ENCODE measurements at regions of chr11 and their contacts with region 1.

Region 1: GRCh38 chr11:7657306-7658025 is 15.8 kb downstream of the CYB5R2 start:
- DNase-seq: peak in 1 of 2 experiments; percentile 65
- H3K4me3 ChIP-seq: no peak overlapping the region
- H3K27ac ChIP-seq: no peak overlapping the region
- H3K4me1 ChIP-seq: no peaks in the 10 kb centered on the region
- H3K27me3 ChIP-seq: no peaks in the 10 kb centered on the region
- CTCF ChIP-seq: peak; percentile 74 to 90 (median 89)
- EP300 ChIP-seq: no peak
- POLR2A ChIP-seq: no peak
- RAD21 ChIP-seq: peak; percentile 96 to 97

Region 2: GRCh38 chr11:7513234-7514098 is 144.0 kb before region 1 on chr11 and contains the start of gene PPFIBP2:
- CTCF ChIA-PET with region 1: interaction called, 28 read pairs
- POLR2A ChIA-PET with region 1: interaction called, 3 read pairs
- DNase-seq: peak in 1 of 2 experiments; percentile 96
- H3K4me3 ChIP-seq: peak within 1 kb of the TSS; percentile 63 to 77 (median 70)
- H3K27ac ChIP-seq: no peak within 1 kb of the TSS
- H3K4me1 ChIP-seq: peaks cover 0 to 9% (median 5%) of the 10 kb centered on the region in 4 experiments; a peak in 5 of 7 replicates
- H3K27me3 ChIP-seq: peaks cover 0 to 17% (median 9%) of the 10 kb centered on the region in 4 experiments; a peak in 4 of 7 replicates
- CTCF ChIP-seq: peak; percentile 51 to 69 (median 65)
- EP300 ChIP-seq: peak in 1 of 2 experiments; percentile 19; a peak in 1 of 3 replicates
- POLR2A ChIP-seq: 0 out of 3 replicates have a peak, but pooled peaks of 1 of the 2 experiments have one; percentile 52
- RAD21 ChIP-seq: peak; percentile 63 to 73
- total RNA-seq, gene PPFIBP2: 9.8 and 11.7 TPM in 2 replicates

Region 3: GRCh38 chr11:7536100-7536499 is 121.4 kb before region 1 on chr11:
- CTCF ChIA-PET with region 1: interaction called, 11 read pairs
- POLR2A ChIA-PET with region 1: no interaction called
- DNase-seq: peak in 1 of 2 experiments; percentile 56
- H3K4me3 ChIP-seq: no peak overlapping the region
- H3K27ac ChIP-seq: no peak overlapping the region
- H3K4me1 ChIP-seq: no peaks in the 10 kb centered on the region; a peak in 2 of 7 replicates
- H3K27me3 ChIP-seq: no peaks in the 10 kb centered on the region
- CTCF ChIP-seq: peak; percentile 30 to 84 (median 67)
- EP300 ChIP-seq: no peak
- POLR2A ChIP-seq: no peak
- RAD21 ChIP-seq: peak; percentile 22 to 26; a peak in 2 of 4 replicates

Region 4: GRCh38 chr11:7555052-7555699 is 102.3 kb before region 1 on chr11:
- CTCF ChIA-PET with region 1: interaction called, 40 read pairs
- POLR2A ChIA-PET with region 1: no interaction called
- DNase-seq: no peak
- H3K4me3 ChIP-seq: no peak overlapping the region
- H3K27ac ChIP-seq: no peak overlapping the region
- H3K4me1 ChIP-seq: peaks cover 0 to 3% (median 0%) of the 10 kb centered on the region in 4 experiments; a peak in 2 of 7 replicates
- H3K27me3 ChIP-seq: no peaks in the 10 kb centered on the region
- CTCF ChIP-seq: no peak
- EP300 ChIP-seq: no peak
- POLR2A ChIP-seq: no peak
- RAD21 ChIP-seq: no peak

Region 5: GRCh38 chr11:7564803-7565202 is 92.7 kb before region 1 on chr11:
- CTCF ChIA-PET with region 1: interaction called, 325 read pairs
- POLR2A ChIA-PET with region 1: no interaction called
- DNase-seq: no peak
- H3K4me3 ChIP-seq: no peak overlapping the region
- H3K27ac ChIP-seq: no peak overlapping the region
- H3K4me1 ChIP-seq: no peaks in the 10 kb centered on the region; a peak in 1 of 7 replicates
- H3K27me3 ChIP-seq: no peaks in the 10 kb centered on the region
- CTCF ChIP-seq: no peak
- EP300 ChIP-seq: no peak
- POLR2A ChIP-seq: no peak
- RAD21 ChIP-seq: no peak

Region 6: DNA sequence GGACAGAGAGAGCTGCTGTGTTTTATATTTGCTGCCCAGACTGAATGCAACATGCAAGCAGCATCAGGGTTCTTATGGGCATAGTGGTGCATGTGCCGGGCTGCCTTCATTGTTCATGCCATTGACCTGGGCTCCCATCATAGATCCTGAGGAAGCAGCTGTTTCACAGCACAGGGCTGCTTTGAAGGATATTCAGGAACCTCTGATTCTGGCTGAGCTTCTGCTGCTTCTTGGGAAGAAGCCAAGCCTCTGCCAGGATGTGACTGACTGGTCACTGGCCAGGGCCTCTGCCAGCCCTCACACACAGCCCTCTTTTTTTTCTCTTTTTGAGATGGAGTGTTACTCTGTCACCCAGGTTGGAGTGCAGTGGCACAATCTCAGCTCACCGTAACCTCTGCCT is 27.5 kb before region 1 on chr11:
- CTCF ChIA-PET with region 1: interaction called, 12 read pairs
- POLR2A ChIA-PET with region 1: no interaction called
- DNase-seq: no peak
- H3K4me3 ChIP-seq: no peak overlapping the region
- H3K27ac ChIP-seq: no peak overlapping the region
- H3K4me1 ChIP-seq: no peaks in the 10 kb centered on the region
- H3K27me3 ChIP-seq: no peaks in the 10 kb centered on the region
- CTCF ChIP-seq: no peak
- EP300 ChIP-seq: no peak
- POLR2A ChIP-seq: no peak
- RAD21 ChIP-seq: no peak

Region 7: GRCh38 chr11:7637447-7638157 is 19.9 kb before region 1 on chr11:
- CTCF ChIA-PET with region 1: interaction called, 14 read pairs
- POLR2A ChIA-PET with region 1: no interaction called
- DNase-seq: no peak
- H3K4me3 ChIP-seq: no peak overlapping the region
- H3K27ac ChIP-seq: no peak overlapping the region
- H3K4me1 ChIP-seq: no peaks in the 10 kb centered on the region
- H3K27me3 ChIP-seq: no peaks in the 10 kb centered on the region
- CTCF ChIP-seq: no peak
- EP300 ChIP-seq: no peak
- POLR2A ChIP-seq: no peak
- RAD21 ChIP-seq: no peak